ENCODE measurements at regions of chr9 and their contacts with region 1.

Region 1: DNA sequence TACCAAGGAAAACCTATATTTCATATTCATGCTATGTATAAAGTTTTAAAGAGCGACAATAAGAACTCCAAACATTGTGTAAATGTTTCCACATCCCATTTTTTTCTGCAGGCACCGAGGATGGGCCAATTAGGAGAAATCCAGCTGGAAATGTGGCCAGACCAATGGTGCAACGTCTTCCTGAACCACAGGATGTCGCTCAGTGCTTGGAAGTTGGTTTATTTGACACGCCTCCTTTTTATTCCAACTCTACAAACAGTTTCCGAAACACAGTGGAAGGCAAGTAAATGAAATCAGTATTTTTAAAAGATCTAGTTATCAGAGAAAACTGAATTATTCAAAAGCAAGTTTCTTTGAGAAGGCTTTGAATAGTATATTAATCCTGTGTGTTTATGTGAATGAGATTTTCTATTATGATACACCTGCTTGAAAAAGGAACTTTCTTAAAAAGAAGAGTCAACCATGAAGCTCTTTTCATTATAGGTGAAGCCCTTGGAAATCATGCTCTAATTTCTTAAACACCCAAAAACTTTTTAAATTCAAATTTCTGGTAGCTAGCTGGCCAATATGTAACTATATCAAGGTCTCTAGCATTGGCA is 9.1 kb downstream of the TYRP1 start:
- DNase-seq: peak; percentile 70
- H3K4me3 ChIP-seq: no peak overlapping the region
- H3K27ac ChIP-seq: no peak overlapping the region
- H3K4me1 ChIP-seq: no peaks in the 10 kb centered on the region
- H3K27me3 ChIP-seq: no peaks in the 10 kb centered on the region
- CTCF ChIP-seq: peak; percentile 58 to 62
- POLR2A ChIP-seq: no peak

Region 2: DNA sequence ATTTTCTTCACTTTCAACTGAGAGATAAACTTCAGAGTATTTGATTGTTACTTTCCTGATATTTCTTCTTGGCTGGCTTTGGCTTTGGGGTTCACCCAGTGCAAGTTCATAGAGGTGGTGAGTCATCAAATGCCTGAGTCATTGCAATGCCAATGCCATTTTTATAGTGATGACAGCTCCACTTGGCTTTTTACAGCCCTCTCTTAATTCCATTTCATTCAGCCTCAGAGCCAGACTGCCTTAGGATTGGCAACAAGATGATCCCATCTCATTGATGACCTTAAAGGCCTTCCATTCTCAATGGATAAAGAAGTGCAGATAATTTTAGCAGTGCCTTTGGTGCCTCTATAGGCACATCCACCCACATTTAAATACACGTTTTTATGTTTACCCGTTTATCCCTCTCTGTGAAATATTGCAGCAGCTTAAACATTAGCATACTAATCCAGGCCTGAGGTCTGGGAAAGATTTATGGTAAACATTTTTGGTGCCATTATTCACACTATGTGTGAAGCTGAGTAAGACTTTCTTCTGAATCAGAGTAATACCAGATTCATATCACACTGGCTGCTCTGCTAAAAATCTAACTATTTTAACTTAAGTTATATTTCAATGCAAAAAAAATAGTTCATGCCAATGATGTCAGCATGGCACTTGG is 98.0 kb before region 1 on chr9:
- CTCF ChIA-PET with region 1: no interaction called
- POLR2A ChIA-PET with region 1: no interaction called
- dilution Hi-C with region 1: no loop called
- intact Hi-C with region 1: no loop called
- DNase-seq: no peak
- H3K4me3 ChIP-seq: no peak overlapping the region
- H3K27ac ChIP-seq: no peak overlapping the region
- H3K4me1 ChIP-seq: no peaks in the 10 kb centered on the region
- H3K27me3 ChIP-seq: peaks cover 0 to 8% of the 10 kb centered on the region in 2 experiments
- CTCF ChIP-seq: no peak
- POLR2A ChIP-seq: no peak

Region 3: GRCh38 chr9:12884737-12885414 is 182.6 kb after region 1 on chr9:
- CTCF ChIA-PET with region 1: interaction called, 17 read pairs
- POLR2A ChIA-PET with region 1: no interaction called
- dilution Hi-C with region 1: no loop called
- intact Hi-C with region 1: loop called (anchors 1 kb)
- DNase-seq: peak; percentile 64
- H3K4me3 ChIP-seq: no peak overlapping the region
- H3K27ac ChIP-seq: no peak overlapping the region
- H3K4me1 ChIP-seq: no peaks in the 10 kb centered on the region
- H3K27me3 ChIP-seq: no peaks in the 10 kb centered on the region
- CTCF ChIP-seq: peak; percentile 22 to 32
- POLR2A ChIP-seq: no peak

Measured in endothelial cell of umbilical vein (primary cell).